Naive thymus-derived CD4-positive, alpha-beta T cell (primary cell): ENCODE measurements at regions of chr19 and their contacts with region 1.

Region 1: DNA sequence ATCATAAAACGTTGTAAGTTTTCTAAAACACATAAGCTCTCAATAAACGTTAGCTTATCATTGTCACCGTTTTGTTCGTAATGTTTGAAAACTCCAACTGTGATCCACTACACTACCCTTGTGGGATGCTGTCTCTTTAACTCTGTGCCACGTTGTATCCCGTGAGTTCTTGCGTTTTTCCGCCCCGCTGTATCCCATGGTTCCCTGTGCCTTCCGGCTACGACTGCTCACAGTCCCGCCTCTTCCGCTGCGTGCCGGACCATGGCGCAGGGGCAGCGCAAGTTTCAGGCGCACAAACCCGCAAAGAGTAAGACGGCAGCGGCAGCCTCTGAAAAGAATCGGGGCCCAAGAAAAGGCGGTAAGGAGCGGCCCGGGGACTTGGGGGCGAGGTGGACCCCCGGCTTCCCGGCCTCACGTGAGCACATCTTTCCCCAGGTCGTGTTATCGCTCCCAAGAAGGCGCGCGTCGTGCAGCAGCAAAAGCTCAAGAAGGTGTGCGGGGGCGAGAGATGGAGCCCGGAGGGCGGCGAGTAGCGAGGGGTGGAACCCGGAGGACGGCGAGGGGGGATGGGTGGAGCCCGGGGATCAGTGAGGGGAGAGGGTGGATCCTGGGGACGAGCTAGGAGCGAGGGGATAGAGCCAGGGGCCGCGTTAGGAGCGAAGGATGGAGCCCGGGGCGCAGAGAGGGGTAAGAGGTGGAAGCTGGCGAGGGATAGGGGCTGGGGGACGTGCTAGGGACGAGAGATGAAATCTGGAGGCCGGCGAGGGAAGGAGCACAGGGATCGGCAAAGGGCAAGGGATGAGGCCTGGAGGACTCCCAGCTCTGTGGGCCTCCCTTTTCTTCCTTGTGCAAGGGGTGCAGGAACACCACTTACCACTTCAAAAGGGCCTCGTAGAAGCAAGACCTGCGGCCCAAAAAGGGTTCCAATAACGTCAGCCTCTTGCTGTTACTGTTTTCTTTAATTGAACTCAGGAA is at the start of gene C19orf53:
- DNase-seq: peak; percentile 74 to 89 (median 86)
- ATAC-seq: peak; percentile 99
- H3K4me3 ChIP-seq: peak within 1 kb of the TSS; percentile 94
- H3K4me3 Mint-ChIP-seq: peak within 1 kb of the TSS; percentile 90 to 100 (median 99)
- H3K27ac ChIP-seq: peak within 1 kb of the TSS; percentile 90
- H3K27ac Mint-ChIP-seq: peak within 1 kb of the TSS; percentile 92 to 100 (median 97)
- H3K4me1 ChIP-seq: peaks cover 9 to 15% of the 10 kb centered on the region in 2 donors
- H3K4me1 Mint-ChIP-seq: peaks cover 10 to 37% (median 28%) of the 10 kb centered on the region in 7 donors
- H3K27me3 ChIP-seq: no peaks in the 10 kb centered on the region
- H3K27me3 Mint-ChIP-seq: no peaks in the 10 kb centered on the region
- total RNA-seq, gene C19orf53: 57.2 to 108 (median 86.2) TPM

Region 2: GRCh38 chr19:13707915-13708314 is 66.6 kb before region 1 on chr19:
- CTCF ChIA-PET with region 1: no interaction called
- POLR2A ChIA-PET with region 1: no interaction called
- intact Hi-C with region 1: no loop called
- DNase-seq: no peak
- ATAC-seq: no peak
- H3K4me3 ChIP-seq: no peak overlapping the region
- H3K4me3 Mint-ChIP-seq: no peak overlapping the region
- H3K27ac ChIP-seq: no peak overlapping the region
- H3K27ac Mint-ChIP-seq: no peak overlapping the region
- H3K4me1 ChIP-seq: no peaks in the 10 kb centered on the region
- H3K4me1 Mint-ChIP-seq: no peaks in the 10 kb centered on the region
- H3K27me3 ChIP-seq: no peaks in the 10 kb centered on the region
- H3K27me3 Mint-ChIP-seq: peaks cover 0 to 23% (median 5%) of the 10 kb centered on the region in 5 donors

Region 3: GRCh38 chr19:13731147-13731964 is 43.1 kb before region 1 on chr19:
- CTCF ChIA-PET with region 1: no interaction called
- POLR2A ChIA-PET with region 1: interaction called, 3 read pairs
- intact Hi-C with region 1: loop called in 1 of 2 experiments (anchors 1 kb)
- DNase-seq: peak; percentile 85 to 95 (median 91)
- ATAC-seq: peak; percentile 100
- H3K4me3 ChIP-seq: peak overlapping the region; percentile 89
- H3K4me3 Mint-ChIP-seq: peak overlapping the region; percentile 82 to 95 (median 92)
- H3K27ac ChIP-seq: peak overlapping the region; percentile 75
- H3K27ac Mint-ChIP-seq: peak overlapping the region; percentile 68 to 95 (median 88)
- H3K4me1 ChIP-seq: peaks cover 3 to 7% of the 10 kb centered on the region in 2 donors
- H3K4me1 Mint-ChIP-seq: peaks cover 6 to 19% (median 11%) of the 10 kb centered on the region in 7 donors
- H3K27me3 ChIP-seq: no peaks in the 10 kb centered on the region
- H3K27me3 Mint-ChIP-seq: no peaks in the 10 kb centered on the region

Region 4: GRCh38 chr19:13764101-13764807 is 10.2 kb before region 1 on chr19 and contains the start of gene MRI1:
- CTCF ChIA-PET with region 1: no interaction called
- POLR2A ChIA-PET with region 1: interaction called, 12 read pairs
- intact Hi-C with region 1: no loop called
- DNase-seq: peak; percentile 23 to 70 (median 43)
- ATAC-seq: peak; percentile 85
- H3K4me3 ChIP-seq: peak within 1 kb of the TSS; percentile 67
- H3K4me3 Mint-ChIP-seq: peak within 1 kb of the TSS; percentile 76 to 94 (median 90)
- H3K27ac ChIP-seq: peak within 1 kb of the TSS; percentile 84
- H3K27ac Mint-ChIP-seq: peak within 1 kb of the TSS; percentile 82 to 94 (median 89)
- H3K4me1 ChIP-seq: peaks cover 0 to 11% of the 10 kb centered on the region in 2 donors
- H3K4me1 Mint-ChIP-seq: peaks cover 8 to 25% (median 18%) of the 10 kb centered on the region in 7 donors
- H3K27me3 ChIP-seq: no peaks in the 10 kb centered on the region
- H3K27me3 Mint-ChIP-seq: no peaks in the 10 kb centered on the region
- total RNA-seq, gene MRI1: 29.1 to 56.2 (median 49.2) TPM

Region 5: GRCh38 chr19:13784731-13785452 is 10.4 kb after region 1 on chr19:
- CTCF ChIA-PET with region 1: interaction called, 6 read pairs
- POLR2A ChIA-PET with region 1: interaction called, 32 read pairs
- intact Hi-C with region 1: no loop called
- DNase-seq: peak; percentile 51 to 73 (median 63)
- ATAC-seq: peak; percentile 87
- H3K4me3 ChIP-seq: no peak overlapping the region
- H3K4me3 Mint-ChIP-seq: peak overlapping the region; percentile 51 to 72 (median 68)
- H3K27ac ChIP-seq: no peak overlapping the region
- H3K27ac Mint-ChIP-seq: peak overlapping the region; percentile 58 to 90 (median 80)
- H3K4me1 ChIP-seq: peaks cover 28 to 32% of the 10 kb centered on the region in 2 donors
- H3K4me1 Mint-ChIP-seq: peaks cover 7 to 46% (median 32%) of the 10 kb centered on the region in 7 donors
- H3K27me3 ChIP-seq: no peaks in the 10 kb centered on the region
- H3K27me3 Mint-ChIP-seq: no peaks in the 10 kb centered on the region

Region 6: GRCh38 chr19:13794757-13795589 is 20.5 kb after region 1 on chr19 and contains the start of gene ZSWIM4:
- CTCF ChIA-PET with region 1: interaction called, 4 read pairs
- POLR2A ChIA-PET with region 1: interaction called, 32 read pairs
- intact Hi-C with region 1: loop called (anchors 1 kb)
- DNase-seq: peak; percentile 67 to 93 (median 77)
- ATAC-seq: peak; percentile 95
- H3K4me3 ChIP-seq: peak within 1 kb of the TSS; percentile 84
- H3K4me3 Mint-ChIP-seq: peak within 1 kb of the TSS; percentile 93 to 97 (median 94)
- H3K27ac ChIP-seq: peak within 1 kb of the TSS; percentile 56
- H3K27ac Mint-ChIP-seq: peak within 1 kb of the TSS; percentile 89 to 97 (median 95)
- H3K4me1 ChIP-seq: peaks cover 14 to 21% of the 10 kb centered on the region in 2 donors
- H3K4me1 Mint-ChIP-seq: peaks cover 22 to 46% (median 37%) of the 10 kb centered on the region in 7 donors
- H3K27me3 ChIP-seq: no peaks in the 10 kb centered on the region
- H3K27me3 Mint-ChIP-seq: no peaks in the 10 kb centered on the region
- total RNA-seq, gene ZSWIM4: 4.8 to 7.8 (median 5.9) TPM

Region 7: DNA sequence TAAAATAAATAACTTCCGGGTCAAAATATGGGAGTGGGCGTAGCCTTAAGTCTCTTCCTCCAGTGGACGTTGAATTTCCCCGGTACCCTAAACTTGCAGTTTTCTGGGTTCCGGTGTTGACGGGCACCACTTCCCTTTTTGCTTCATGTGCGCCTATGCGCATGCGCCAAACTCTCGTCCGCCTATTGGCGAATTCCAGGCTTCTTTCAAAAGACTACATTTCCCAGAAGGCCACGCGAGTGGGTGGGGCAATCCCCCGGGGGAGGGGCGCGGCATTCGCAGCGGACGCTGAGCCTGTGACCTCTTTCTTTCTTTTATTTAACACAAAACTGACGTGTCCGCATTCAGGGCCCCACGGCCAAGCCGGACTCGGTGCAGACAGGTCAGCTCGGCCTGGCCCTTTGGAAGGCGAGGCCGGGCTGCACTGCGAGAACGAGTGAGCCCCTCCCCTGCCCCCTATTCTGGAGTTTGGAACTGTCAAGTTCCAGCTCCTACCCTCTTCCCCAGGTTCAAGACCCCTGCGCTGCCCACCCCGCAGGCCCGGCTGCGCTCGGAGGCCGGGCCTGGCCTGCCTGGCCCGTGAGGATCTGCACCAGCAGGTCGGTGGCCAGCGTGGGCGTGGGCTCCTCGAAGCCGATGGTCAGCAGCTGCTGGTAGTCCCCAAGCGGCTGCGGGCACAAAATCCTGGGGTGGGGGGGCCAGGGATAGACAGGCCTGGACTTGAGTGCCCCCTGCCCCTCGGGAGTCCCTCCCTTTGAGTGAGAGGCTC is 307.0 kb after region 1 on chr19:
- CTCF ChIA-PET with region 1: no interaction called
- POLR2A ChIA-PET with region 1: no interaction called
- intact Hi-C with region 1: loop called (anchors 1 to 10 kb)
- DNase-seq: peak; percentile 96 to 100 (median 99)
- ATAC-seq: peak; percentile 97
- H3K4me3 ChIP-seq: peak overlapping the region; percentile 86
- H3K4me3 Mint-ChIP-seq: peak overlapping the region; percentile 80 to 98 (median 94)
- H3K27ac ChIP-seq: peak overlapping the region; percentile 80
- H3K27ac Mint-ChIP-seq: peak overlapping the region; percentile 86 to 98 (median 95)
- H3K4me1 ChIP-seq: peaks cover 5 to 15% of the 10 kb centered on the region in 2 donors
- H3K4me1 Mint-ChIP-seq: peaks cover 0 to 27% (median 17%) of the 10 kb centered on the region in 7 donors
- H3K27me3 ChIP-seq: no peaks in the 10 kb centered on the region
- H3K27me3 Mint-ChIP-seq: no peaks in the 10 kb centered on the region